ENCODE measurements at regions of chr20 and their contacts with region 1.

Region 1: DNA sequence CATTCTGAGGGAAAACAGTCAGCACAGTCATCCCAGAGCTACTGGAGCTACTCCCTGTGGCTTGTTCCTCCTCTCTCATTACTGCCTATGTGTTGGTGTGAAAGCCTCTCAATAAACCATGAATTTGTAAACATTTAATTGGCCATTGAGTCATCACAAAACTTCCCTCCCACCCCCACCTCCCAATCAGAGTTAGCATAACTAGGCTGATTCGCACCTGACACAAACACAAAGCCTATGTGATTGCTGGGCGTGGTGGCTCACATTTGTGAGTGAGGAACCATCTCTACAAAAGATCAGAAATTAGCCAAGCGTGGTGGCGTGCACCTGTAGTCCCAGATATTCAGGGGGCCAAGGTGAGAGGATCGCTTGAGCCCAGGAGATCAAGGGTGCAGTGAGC is 17.1 kb upstream of the SNTA1 start:
- DNase-seq: no peak
- ATAC-seq: no peak
- H3K4me3 ChIP-seq: no peak overlapping the region
- H3K27ac ChIP-seq: no peak overlapping the region
- H3K4me1 ChIP-seq: no peaks in the 10 kb centered on the region
- H3K27me3 ChIP-seq: no peaks in the 10 kb centered on the region
- CTCF ChIP-seq: no peak

Region 2: GRCh38 chr20:33499355-33499754 is 38.6 kb after region 1 on chr20:
- intact Hi-C with region 1: no loop called
- DNase-seq: no peak
- ATAC-seq: no peak
- H3K4me3 ChIP-seq: no peak overlapping the region
- H3K27ac ChIP-seq: no peak overlapping the region
- H3K4me1 ChIP-seq: peaks cover 27% of the 10 kb centered on the region
- H3K27me3 ChIP-seq: no peaks in the 10 kb centered on the region
- CTCF ChIP-seq: no peak

Region 3: DNA sequence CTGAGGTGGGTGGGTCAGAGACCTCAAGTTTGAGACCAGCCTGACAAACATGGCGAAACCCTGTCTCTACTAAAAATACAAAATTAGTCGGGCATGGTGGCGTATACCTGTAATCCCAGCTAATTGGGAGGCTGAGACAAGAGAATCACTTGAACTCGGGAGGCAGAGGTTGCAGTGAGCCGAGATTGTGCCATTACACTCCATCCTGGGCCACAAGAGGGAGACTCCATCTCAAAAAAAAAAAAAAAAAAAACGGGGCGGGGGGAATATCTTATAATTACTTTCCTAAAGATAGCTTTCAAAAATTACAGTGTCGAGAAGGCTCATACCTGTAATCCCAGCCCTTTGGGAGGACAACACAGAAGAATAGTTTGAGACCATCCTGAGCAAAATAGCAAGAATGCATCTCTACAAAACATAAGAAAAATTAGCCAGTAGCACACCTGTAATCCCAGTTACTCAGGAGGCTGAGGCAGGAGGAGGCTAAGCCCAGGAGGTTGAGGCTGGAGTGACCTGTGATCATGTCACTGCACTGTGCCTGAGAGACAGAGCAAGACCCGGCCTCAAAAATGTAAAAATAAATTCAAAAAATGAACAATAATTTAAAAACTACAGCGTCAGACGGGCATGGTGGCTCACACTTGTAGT is 55.0 kb after region 1 on chr20:
- intact Hi-C with region 1: no loop called
- DNase-seq: no peak
- ATAC-seq: no peak
- H3K4me3 ChIP-seq: no peak overlapping the region
- H3K27ac ChIP-seq: no peak overlapping the region
- H3K4me1 ChIP-seq: peaks cover 18% of the 10 kb centered on the region
- H3K27me3 ChIP-seq: no peaks in the 10 kb centered on the region
- CTCF ChIP-seq: no peak

Region 4: GRCh38 chr20:33653218-33653899 is 192.6 kb after region 1 on chr20:
- intact Hi-C with region 1: loop called (anchors 5 kb)
- DNase-seq: no peak
- ATAC-seq: peak; percentile 51 to 73 (median 62)
- H3K4me3 ChIP-seq: peak overlapping the region; percentile 15
- H3K27ac ChIP-seq: no peak overlapping the region
- H3K4me1 ChIP-seq: peaks cover 21% of the 10 kb centered on the region
- H3K27me3 ChIP-seq: no peaks in the 10 kb centered on the region
- CTCF ChIP-seq: peak; percentile 68

Region 5: GRCh38 chr20:33666293-33667244 is 205.9 kb after region 1 on chr20 and contains the start of gene ACTL10:
- intact Hi-C with region 1: loop called (anchors 5 kb)
- DNase-seq: peak; percentile 97 to 98
- ATAC-seq: peak; percentile 61 to 70 (median 66)
- H3K4me3 ChIP-seq: peak within 1 kb of the TSS; percentile 73
- H3K27ac ChIP-seq: peak within 1 kb of the TSS; percentile 75
- H3K4me1 ChIP-seq: peaks cover 36% of the 10 kb centered on the region
- H3K27me3 ChIP-seq: no peaks in the 10 kb centered on the region
- CTCF ChIP-seq: peak; percentile 33
- total RNA-seq, gene ACTL10: 0.27 to 0.42 (median 0.37) TPM in 3 of 4 donors, not detected in the other

Measured in psoas muscle (tissue), 8 donors.